Endothelial cell of umbilical vein (primary cell): ENCODE measurements at regions of chr6 and their contacts with region 1.

Region 1: GRCh38 chr6:50655848-50656453 is 57.4 kb upstream of the TFAP2D start:
- DNase-seq: peak; percentile 32
- H3K4me3 ChIP-seq: no peak overlapping the region
- H3K27ac ChIP-seq: no peak overlapping the region
- H3K4me1 ChIP-seq: peaks cover 37% of the 10 kb centered on the region
- H3K27me3 ChIP-seq: no peaks in the 10 kb centered on the region
- CTCF ChIP-seq: peak; percentile 33 to 35
- POLR2A ChIP-seq: no peak

Region 2: DNA sequence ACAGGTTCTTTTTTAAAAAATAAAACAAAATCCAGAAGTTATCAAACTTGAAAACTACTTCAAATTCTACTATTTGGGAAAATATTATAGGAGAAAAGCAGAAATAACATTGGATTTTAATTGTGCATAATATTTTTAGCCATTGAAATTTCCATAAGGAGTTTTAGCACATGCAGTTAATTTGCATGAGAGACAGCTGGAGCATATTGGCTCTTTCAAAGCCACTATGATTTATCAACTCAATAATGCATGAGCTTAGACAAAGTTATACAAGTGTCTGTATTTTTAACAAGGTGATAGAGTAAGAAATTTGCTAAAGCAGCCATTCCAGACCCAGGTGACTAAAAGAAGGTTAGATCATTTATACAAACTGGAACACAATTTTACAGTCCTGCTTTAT is 131.6 kb before region 1 on chr6:
- CTCF ChIA-PET with region 1: no interaction called
- POLR2A ChIA-PET with region 1: no interaction called
- dilution Hi-C with region 1: no loop called
- intact Hi-C with region 1: no loop called
- DNase-seq: no peak
- H3K4me3 ChIP-seq: no peak overlapping the region
- H3K27ac ChIP-seq: no peak overlapping the region
- H3K4me1 ChIP-seq: no peaks in the 10 kb centered on the region
- H3K27me3 ChIP-seq: no peaks in the 10 kb centered on the region
- CTCF ChIP-seq: no peak
- POLR2A ChIP-seq: no peak

Region 3: DNA sequence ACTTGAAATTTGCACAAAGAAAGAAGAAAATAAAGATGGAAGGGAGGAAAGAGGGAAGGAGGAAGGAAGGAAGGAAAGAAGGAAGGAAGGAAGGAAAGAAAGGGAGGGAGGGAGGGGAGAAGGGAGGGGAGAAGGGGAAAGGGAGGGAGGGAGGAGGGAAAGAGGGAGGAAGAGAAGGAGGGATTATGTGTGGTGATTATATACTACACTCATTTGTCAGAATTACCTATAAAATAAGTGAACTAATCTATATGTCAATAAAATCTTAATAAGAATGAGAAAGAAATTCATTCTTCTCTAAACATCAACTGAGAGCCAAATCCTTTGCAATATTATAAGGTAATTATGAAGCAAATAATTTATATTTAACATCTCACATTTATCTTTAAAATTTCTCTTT is 20.5 kb before region 1 on chr6:
- CTCF ChIA-PET with region 1: no interaction called
- POLR2A ChIA-PET with region 1: no interaction called
- dilution Hi-C with region 1: no loop called
- intact Hi-C with region 1: no loop called
- DNase-seq: no peak
- H3K4me3 ChIP-seq: no peak overlapping the region
- H3K27ac ChIP-seq: no peak overlapping the region
- H3K4me1 ChIP-seq: no peaks in the 10 kb centered on the region
- H3K27me3 ChIP-seq: no peaks in the 10 kb centered on the region
- CTCF ChIP-seq: no peak
- POLR2A ChIP-seq: no peak

Region 4: DNA sequence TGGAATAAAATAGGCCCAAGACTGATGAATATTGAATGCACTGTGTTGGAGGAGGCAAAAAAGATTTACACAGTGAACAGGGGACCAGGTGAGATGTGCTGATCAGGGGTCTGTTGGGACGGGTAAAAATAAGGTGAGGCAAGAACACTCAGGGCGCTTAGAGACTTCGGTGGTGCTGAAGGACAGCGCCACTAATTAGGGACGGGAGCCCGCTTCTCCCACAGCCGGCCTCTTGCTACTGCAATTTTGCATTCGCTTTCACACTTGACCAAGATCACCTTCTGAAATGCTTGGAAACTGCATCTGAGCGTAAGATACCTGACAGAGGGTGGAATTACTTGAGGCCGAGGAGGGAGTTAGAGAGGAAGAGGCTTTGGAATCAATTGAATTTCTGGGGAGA is 64.7 kb after region 1 on chr6:
- CTCF ChIA-PET with region 1: interaction called, 6 read pairs
- POLR2A ChIA-PET with region 1: no interaction called
- dilution Hi-C with region 1: no loop called
- intact Hi-C with region 1: loop called (anchors 5 kb)
- DNase-seq: peak; percentile 5
- H3K4me3 ChIP-seq: no peak overlapping the region
- H3K27ac ChIP-seq: no peak overlapping the region
- H3K4me1 ChIP-seq: no peaks in the 10 kb centered on the region
- H3K27me3 ChIP-seq: peaks cover 58 to 76% of the 10 kb centered on the region in 2 experiments
- CTCF ChIP-seq: no peak
- POLR2A ChIP-seq: no peak

Region 5: DNA sequence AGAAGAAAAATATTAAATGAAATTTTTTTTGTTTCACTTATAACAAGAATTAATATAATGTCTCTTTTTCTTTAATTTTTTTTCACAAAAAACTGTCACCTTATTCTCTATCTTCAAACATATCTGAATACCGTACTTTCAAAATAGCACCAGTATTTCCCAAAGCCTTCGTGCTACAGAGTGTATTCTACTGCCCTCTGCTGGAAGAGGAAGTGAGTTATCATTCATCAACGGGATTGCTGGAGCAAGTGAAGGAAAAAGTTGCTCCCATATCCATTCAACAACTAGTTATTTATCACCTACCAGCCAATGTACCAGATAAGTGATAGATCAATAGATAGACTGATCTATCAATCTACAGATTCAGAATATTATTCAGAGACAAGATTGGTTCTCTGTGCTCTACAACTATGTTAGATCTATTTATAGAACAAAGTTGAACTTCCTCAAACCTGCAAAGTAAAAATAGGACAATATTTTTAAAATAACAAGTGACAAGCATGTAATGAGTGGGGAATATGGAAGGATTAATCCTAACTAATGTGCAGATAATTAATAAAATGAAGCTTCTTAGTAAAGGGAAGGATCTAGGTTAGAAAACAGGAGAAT is 136.1 kb after region 1 on chr6:
- CTCF ChIA-PET with region 1: interaction called, 14 read pairs
- POLR2A ChIA-PET with region 1: no interaction called
- dilution Hi-C with region 1: no loop called
- intact Hi-C with region 1: loop called (anchors 1 kb)
- DNase-seq: peak; percentile 50
- H3K4me3 ChIP-seq: no peak overlapping the region
- H3K27ac ChIP-seq: no peak overlapping the region
- H3K4me1 ChIP-seq: no peaks in the 10 kb centered on the region
- H3K27me3 ChIP-seq: no peaks in the 10 kb centered on the region
- CTCF ChIP-seq: peak; percentile 46 to 54
- POLR2A ChIP-seq: no peak

Region 6: GRCh38 chr6:51049983-51050877 is 394.3 kb after region 1 on chr6:
- CTCF ChIA-PET with region 1: no interaction called
- POLR2A ChIA-PET with region 1: no interaction called
- dilution Hi-C with region 1: no loop called
- intact Hi-C with region 1: no loop called
- DNase-seq: no peak
- H3K4me3 ChIP-seq: no peak overlapping the region
- H3K27ac ChIP-seq: no peak overlapping the region
- H3K4me1 ChIP-seq: no peaks in the 10 kb centered on the region
- H3K27me3 ChIP-seq: no peaks in the 10 kb centered on the region
- CTCF ChIP-seq: no peak
- POLR2A ChIP-seq: no peak